Activated naive CD4-positive, alpha-beta T cell treated with anti-CD3 and anti-CD28 coated beads, Interleukin-2, amount 10 ng/mL, durations not matched to agents 7 days and 5 days (primary cell): ENCODE measurements at regions of chr15 and their contacts with region 1.

Region 1: DNA sequence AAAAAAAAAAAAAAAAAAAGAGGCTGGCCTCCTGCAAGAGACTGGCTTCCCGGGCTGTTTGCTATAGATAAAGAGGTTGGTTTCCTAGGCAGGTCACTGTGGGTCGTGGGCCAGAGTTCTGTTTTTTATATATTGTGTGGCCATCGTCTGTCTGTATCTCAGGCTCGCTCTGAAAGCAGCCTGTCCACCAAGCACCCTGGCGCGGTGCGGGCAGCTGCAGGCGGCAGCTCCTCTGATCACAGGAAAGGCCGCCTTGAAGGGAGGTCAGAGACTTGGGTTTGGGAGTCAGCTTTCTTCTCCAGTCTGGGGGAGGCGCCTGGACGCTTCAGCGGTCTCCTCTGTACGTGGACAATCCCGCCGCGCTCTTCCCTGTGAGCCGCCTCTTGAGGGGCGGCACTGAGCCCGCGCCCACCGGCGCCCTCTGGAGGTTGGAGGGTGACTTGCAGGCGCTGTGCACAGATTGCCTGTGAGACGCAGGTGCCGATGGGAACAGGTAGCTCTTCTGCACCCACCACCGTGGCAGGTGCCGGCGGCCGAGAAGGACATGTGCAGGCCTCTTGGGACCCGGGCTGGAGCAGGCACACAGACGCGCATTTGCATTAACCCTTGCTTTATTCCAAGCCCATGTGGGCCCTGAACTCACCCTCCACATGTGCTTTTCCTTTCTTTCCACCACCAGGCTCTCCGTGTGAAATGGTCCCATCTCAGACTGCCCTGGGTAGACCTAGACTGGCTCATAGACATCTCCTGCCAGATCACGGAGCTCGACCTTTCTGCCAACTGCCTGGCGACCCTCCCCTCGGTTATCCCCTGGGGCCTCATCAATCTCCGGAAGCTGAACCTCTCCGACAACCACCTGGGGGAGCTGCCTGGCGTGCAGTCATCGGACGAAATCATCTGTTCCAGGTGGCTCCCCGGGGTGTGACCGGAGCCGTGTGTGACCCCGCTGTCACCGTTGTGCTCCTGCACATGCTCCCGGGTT is 89.3 kb downstream of the LRRK1 start:
- DNase-seq: peak; percentile 90
- H3K4me3 Mint-ChIP-seq: peak overlapping the region; percentile 76
- H3K27ac Mint-ChIP-seq: peak overlapping the region; percentile 28
- H3K4me1 Mint-ChIP-seq: peaks cover 22% of the 10 kb centered on the region
- H3K27me3 Mint-ChIP-seq: peaks cover 42% of the 10 kb centered on the region

Region 2: DNA sequence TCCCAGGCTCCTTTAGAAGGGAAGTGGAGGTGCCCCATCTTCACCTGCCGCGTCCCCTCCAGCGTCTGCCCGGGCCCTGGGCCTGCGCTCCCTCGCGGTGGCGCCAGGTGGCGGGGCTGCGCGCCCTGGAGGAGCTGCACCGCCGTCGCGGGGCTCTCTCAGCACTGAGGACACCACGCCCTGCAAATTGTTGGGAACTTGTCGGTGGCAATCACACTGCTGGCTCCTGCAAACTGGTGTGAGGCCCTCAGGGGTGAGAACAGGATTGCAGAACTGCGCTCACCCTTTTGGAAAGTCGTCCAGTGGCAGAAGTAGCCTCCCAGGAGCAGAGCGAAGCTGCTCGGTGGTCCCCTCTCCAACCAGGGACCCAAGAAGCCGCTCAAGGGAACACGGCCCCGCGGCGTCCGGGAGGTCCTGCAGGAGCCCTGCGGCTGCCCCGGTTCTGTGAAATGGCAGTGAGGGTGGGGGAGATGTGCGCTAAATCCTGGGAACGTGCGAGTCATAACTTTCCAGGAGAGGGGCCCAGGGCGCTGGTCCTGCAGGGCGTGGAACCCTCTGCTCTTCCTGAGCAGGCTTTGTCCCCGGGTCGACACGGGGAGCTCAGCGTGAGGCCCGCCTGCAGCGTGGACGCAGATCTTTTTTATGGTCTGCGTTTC is 90.3 kb before region 1 on chr15:
- CTCF ChIA-PET with region 1: interaction called, 148 read pairs
- DNase-seq: peak; percentile 78
- H3K4me3 Mint-ChIP-seq: peak overlapping the region; percentile 68
- H3K27ac Mint-ChIP-seq: no peak overlapping the region
- H3K4me1 Mint-ChIP-seq: peaks cover 29% of the 10 kb centered on the region
- H3K27me3 Mint-ChIP-seq: peaks cover 82% of the 10 kb centered on the region

Region 3: GRCh38 chr15:100958326-100959065 is 50.0 kb before region 1 on chr15:
- CTCF ChIA-PET with region 1: no interaction called
- DNase-seq: no peak
- H3K4me3 Mint-ChIP-seq: no peak overlapping the region
- H3K27ac Mint-ChIP-seq: no peak overlapping the region
- H3K4me1 Mint-ChIP-seq: no peaks in the 10 kb centered on the region
- H3K27me3 Mint-ChIP-seq: peaks cover 35% of the 10 kb centered on the region

Region 4: GRCh38 chr15:101024073-101024695 is 15.7 kb after region 1 on chr15:
- CTCF ChIA-PET with region 1: interaction called, 51 read pairs
- DNase-seq: no peak
- H3K4me3 Mint-ChIP-seq: no peak overlapping the region
- H3K27ac Mint-ChIP-seq: no peak overlapping the region
- H3K4me1 Mint-ChIP-seq: no peaks in the 10 kb centered on the region
- H3K27me3 Mint-ChIP-seq: peaks cover 16% of the 10 kb centered on the region

Region 5: DNA sequence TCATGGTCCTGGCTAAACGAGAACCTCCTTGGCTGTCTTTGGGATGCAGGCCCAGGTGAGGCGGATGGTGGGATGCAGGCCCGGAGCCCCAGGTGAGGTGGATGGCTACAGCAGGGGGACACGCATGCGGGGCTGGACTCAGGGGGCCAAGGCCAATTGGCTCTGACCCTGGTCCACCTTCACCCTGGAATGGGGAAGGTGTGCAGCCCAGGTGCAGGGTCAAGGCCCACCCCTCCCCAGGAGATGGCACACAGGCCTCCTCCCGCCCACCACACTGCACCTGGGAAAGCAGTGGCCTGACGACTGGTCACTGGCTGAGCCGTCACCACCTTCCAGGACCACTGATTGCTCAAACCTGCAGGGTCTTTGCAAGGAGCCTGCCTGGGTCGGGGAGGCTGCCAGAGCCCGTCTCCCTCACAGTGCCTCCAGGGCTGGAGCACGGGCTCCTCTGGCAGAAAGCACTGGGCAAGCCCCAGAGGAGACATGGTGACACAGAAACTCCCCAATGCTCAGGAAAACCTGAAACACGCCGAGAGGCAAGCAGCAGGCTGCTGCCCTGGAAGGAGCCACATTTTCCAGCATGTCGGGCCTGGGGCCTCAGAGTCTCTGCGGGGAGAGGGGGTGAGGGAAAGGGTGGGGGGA is 70.4 kb after region 1 on chr15:
- CTCF ChIA-PET with region 1: no interaction called
- DNase-seq: no peak
- H3K4me3 Mint-ChIP-seq: no peak overlapping the region
- H3K27ac Mint-ChIP-seq: no peak overlapping the region
- H3K4me1 Mint-ChIP-seq: no peaks in the 10 kb centered on the region
- H3K27me3 Mint-ChIP-seq: peaks cover 7% of the 10 kb centered on the region

Region 6: DNA sequence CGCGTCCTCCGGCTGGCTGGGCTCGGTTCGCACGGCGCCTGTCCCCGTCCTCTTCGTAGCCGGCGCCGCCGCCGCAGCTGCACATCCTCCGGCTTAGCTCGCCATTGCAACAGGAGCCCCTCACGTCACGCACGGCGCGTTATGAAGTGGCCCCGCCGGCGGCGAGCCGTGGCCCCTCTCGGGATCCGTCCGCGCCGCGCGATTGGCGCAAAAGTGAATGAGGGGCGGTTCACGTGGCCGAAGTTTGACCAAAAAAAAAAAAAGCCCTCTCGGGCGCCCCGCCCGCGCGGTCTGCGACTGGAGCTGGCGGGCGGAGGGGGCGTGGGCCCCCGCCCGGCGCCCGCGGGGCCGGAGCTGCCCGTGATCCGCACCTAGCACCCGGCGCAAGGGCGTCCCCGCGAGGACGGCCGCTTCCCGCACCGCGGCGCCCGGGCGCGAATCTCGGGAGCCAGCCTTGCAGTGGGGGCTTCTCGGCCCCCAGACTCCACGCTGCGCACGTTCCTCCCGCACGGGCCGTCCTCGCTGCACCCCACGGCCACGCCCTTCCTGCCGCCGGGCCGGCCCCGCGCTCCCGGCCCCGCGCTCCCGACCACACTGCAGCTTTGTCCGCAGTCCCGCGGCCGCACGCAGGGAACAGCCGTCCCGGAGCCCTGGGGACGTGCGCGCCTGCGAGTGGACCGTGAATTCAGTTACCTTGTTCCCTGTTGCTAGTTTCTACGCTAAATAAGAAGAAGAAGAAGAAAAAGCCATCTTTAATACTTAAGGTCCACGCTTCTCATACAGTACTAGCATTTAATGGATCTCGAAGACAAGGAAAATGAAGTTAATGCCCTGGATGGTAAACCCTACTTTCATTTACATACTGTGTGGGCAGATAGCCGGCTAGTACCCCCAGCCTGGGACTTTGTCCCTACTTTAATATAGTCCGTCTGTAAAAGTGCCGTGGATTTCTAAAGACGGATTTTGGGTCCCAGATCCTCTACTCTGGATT is 243.7 kb after region 1 on chr15 and contains the start of gene CHSY1:
- CTCF ChIA-PET with region 1: interaction called, 176 read pairs
- DNase-seq: peak; percentile 89
- H3K4me3 Mint-ChIP-seq: peak within 1 kb of the TSS; percentile 92
- H3K27ac Mint-ChIP-seq: peak within 1 kb of the TSS; percentile 89
- H3K4me1 Mint-ChIP-seq: peaks cover 65% of the 10 kb centered on the region
- H3K27me3 Mint-ChIP-seq: peaks cover 9% of the 10 kb centered on the region